ENCODE measurements at regions of chr22 and their contacts with region 1.

Region 1: GRCh38 chr22:35430897-35431322 is 31.0 kb downstream of the MCM5 start:
- DNase-seq: peak; percentile 55
- H3K4me3 ChIP-seq: no peak overlapping the region
- H3K27me3 ChIP-seq: no peaks in the 10 kb centered on the region
- CTCF ChIP-seq: peak; percentile 99

Region 2: DNA sequence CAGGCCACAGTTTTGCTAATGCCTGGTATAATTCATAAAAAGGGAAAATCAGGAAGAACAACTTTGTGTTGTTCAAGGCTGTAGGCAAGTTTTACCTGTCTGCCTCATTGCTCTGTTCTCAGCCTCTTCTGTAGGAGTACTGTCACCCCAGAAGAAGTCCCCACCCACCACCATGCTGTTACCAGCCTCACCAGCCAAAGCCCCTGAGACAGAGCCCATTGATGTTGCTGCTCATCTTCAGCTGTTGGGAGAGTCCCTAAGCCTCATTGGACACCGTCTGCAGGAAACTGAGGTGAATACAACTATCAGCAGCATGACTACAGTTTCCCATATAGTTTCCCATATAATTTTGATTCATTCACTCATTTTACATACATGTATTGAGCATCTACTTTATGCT is 142.8 kb before region 1 on chr22:
- CTCF ChIA-PET with region 1: no interaction called
- POLR2A ChIA-PET with region 1: no interaction called
- DNase-seq: no peak
- H3K4me3 ChIP-seq: no peak overlapping the region
- H3K27me3 ChIP-seq: no peaks in the 10 kb centered on the region
- CTCF ChIP-seq: no peak

Region 3: DNA sequence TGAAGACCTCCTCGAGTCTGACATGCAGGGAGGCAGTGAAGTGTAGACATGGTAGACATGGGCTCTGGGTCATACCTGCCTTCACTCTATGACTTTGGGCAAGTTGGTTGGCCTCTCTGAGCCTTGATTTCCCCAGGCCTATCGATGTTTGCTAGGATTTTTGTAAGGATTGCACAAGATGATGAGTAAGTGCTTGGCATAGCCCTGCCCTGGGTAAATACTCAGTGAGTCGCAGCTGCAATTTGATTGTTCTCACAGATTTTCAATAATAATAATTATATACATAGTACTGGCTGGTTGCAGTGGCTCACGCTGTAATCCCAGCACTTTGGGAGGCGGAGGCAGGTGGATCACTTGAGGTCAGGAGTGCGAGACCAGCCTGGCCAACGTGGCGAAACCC is 12.8 kb before region 1 on chr22:
- CTCF ChIA-PET with region 1: interaction called, 14 read pairs
- POLR2A ChIA-PET with region 1: no interaction called
- DNase-seq: no peak
- H3K4me3 ChIP-seq: no peak overlapping the region
- H3K27me3 ChIP-seq: no peaks in the 10 kb centered on the region
- CTCF ChIP-seq: no peak

Region 4: DNA sequence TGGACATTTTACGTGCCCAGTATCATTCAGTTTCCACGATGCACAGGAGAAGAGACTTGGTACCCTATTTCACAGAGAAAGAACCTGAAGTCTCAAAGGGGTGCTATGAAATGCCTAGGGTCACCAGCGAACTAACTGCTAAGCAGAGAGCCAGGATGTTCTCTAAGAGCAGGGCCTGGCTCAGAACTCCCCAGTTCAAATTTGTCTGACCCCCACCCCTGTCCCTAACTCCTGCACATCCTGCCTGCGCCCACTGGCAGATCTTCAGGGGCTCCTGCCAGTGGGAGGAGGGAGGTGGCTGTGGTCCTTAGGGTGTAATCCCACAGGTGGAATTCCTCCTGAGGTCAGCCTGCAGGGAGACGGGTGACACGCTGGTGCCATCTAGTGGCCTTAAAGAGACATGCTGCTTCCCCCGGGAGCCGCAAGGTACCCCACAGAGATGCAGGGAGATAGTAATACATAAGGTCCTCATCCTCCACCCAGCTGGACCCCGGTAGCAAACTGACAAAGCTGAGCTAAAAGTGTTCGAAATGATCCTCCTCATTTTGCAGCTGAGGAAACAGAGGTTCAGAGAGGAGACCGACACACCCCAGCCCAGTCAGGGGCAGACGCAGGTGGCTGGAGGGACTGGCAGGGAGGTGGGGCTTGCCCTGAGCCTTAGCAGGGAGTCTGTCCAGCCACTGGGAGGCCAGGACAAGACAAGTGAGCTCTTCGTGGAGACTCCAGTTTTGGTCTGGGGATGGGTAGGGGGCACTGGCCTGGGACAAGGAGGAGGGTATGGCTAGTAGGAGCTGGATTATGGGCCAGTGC is 152.2 kb after region 1 on chr22:
- CTCF ChIA-PET with region 1: interaction called, 220 read pairs
- POLR2A ChIA-PET with region 1: no interaction called
- DNase-seq: no peak
- H3K4me3 ChIP-seq: no peak overlapping the region
- H3K27me3 ChIP-seq: no peaks in the 10 kb centered on the region
- CTCF ChIP-seq: peak; percentile 93

Region 5: DNA sequence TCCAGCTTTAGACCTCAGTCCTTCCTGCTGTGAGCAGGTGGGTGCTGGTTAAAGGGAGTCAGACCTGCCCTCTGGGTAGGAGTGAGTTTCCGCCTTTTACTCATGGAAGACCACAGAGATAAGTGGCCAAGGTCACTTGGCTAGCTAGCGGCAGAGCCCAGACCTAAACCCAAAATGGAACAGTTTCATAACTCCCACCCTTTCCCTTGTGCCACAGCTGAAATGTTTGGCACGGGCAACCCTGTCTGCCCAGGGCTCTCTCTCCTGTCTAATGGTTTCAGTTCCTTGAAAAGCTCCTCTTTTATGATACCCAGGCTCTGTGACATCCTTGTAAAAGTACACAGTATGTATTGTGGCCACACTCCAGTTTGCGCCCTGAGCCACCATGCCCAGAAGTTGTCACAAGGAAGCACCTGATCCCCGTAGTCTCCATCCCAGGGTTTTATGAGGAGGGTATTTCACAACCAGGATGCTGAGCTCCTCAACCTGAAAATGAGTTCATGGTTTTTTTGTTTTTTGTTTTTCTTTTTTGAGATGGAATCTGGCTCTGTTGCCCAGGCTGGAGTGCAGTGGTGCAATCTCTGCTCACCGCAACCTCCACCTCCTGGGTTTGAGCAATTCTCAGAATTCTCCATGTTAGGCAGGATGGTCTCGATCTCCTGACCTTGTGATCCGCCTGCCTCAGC is 181.1 kb after region 1 on chr22:
- CTCF ChIA-PET with region 1: interaction called, 13 read pairs
- POLR2A ChIA-PET with region 1: no interaction called
- DNase-seq: no peak
- H3K4me3 ChIP-seq: no peak overlapping the region
- H3K27me3 ChIP-seq: peaks cover 17% of the 10 kb centered on the region
- CTCF ChIP-seq: no peak

Region 6: GRCh38 chr22:35627264-35628041 is 196.5 kb after region 1 on chr22:
- CTCF ChIA-PET with region 1: interaction called, 33 read pairs
- POLR2A ChIA-PET with region 1: no interaction called
- DNase-seq: peak; percentile 69
- H3K4me3 ChIP-seq: peak overlapping the region; percentile 49
- H3K27me3 ChIP-seq: no peaks in the 10 kb centered on the region
- CTCF ChIP-seq: peak; percentile 70

Measured in BJ (cell line).